Heart right ventricle (tissue), 16 donors: ENCODE measurements at regions of chr20 and their contacts with region 1.

Region 1: GRCh38 chr20:37384683-37385174 is 38.8 kb downstream of the SRC start:
- DNase-seq: peak; percentile 46 to 75
- ATAC-seq: peak; percentile 82 to 90 (median 84)
- H3K4me3 ChIP-seq: peak overlapping the region; percentile 21 to 60 (median 57)
- H3K27ac ChIP-seq: peak overlapping the region in 4 of 10 donors; percentile 28 to 74 (median 36)
- H3K4me1 ChIP-seq: peaks cover 0 to 20% (median 5%) of the 10 kb centered on the region in 9 donors
- H3K27me3 ChIP-seq: no peaks in the 10 kb centered on the region
- CTCF ChIP-seq: peak; percentile 87 to 95 (median 90)

Region 2: DNA sequence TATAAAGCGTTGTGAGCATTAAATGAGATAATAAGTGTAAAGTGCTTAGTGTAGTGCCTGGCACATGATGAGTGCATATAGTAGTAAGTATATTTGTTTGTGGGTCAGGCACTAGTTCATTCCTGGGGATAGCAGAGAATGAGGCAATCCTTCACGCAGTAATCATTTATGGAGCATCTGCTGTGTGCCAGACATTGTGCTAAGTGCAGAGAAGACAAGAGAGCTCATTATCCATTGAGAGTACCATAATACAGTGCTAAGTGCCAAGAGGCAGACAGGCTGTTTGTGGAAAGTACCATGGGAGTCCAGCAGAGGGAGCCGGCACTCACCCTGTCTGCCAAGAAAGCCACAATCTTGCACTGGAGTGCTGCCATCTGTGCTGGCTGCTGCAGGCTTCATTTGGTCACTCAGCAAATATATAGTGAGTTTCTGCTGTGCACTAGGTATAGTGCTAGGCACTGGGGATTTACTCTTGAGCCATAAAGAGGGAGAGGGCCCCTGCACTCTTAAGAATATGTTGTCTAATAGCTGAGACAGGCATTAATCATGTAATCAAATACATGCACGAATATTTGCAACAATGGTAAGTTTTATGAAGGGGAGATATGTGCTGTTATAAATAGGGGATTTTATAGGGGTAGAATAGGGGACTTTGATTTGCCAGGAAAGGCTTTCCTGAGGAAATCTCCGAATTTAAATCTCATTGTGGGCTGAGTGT is 192.4 kb before region 1 on chr20:
- intact Hi-C with region 1: loop called in 3 of 10 experiments (anchors 5 to 10 kb)
- DNase-seq: peak; percentile 82 to 90
- ATAC-seq: peak; percentile 81 to 96 (median 90)
- H3K4me3 ChIP-seq: no peak overlapping the region
- H3K27ac ChIP-seq: peak overlapping the region in 2 of 10 donors; percentile 7 to 14
- H3K4me1 ChIP-seq: peaks cover 3 to 58% (median 48%) of the 10 kb centered on the region in 9 donors
- H3K27me3 ChIP-seq: no peaks in the 10 kb centered on the region
- CTCF ChIP-seq: peak; percentile 87 to 97 (median 90)

Region 3: GRCh38 chr20:37202267-37202943 is 182.3 kb before region 1 on chr20:
- intact Hi-C with region 1: loop called in 5 of 10 experiments (anchors 5 to 10 kb)
- DNase-seq: peak in 1 of 2 donors; percentile 16
- ATAC-seq: peak in 4 of 8 donors; percentile 56 to 70 (median 64)
- H3K4me3 ChIP-seq: no peak overlapping the region
- H3K27ac ChIP-seq: peak overlapping the region in 1 of 10 donors; percentile 9
- H3K4me1 ChIP-seq: peaks cover 0 to 20% (median 6%) of the 10 kb centered on the region in 9 donors
- H3K27me3 ChIP-seq: no peaks in the 10 kb centered on the region
- CTCF ChIP-seq: peak; percentile 63 to 82 (median 74)

Region 4: GRCh38 chr20:37265152-37265551 is 119.6 kb before region 1 on chr20:
- intact Hi-C with region 1: loop called in 8 of 10 experiments (anchors 1 to 5 kb)
- DNase-seq: no peak
- ATAC-seq: no peak
- H3K4me3 ChIP-seq: no peak overlapping the region
- H3K27ac ChIP-seq: no peak overlapping the region
- H3K4me1 ChIP-seq: peaks cover 0 to 4% (median 0%) of the 10 kb centered on the region in 9 donors
- H3K27me3 ChIP-seq: peaks cover 0 to 29% (median 16%) of the 10 kb centered on the region in 7 donors
- CTCF ChIP-seq: no peak

Region 5: GRCh38 chr20:37270576-37271420 is 113.9 kb before region 1 on chr20:
- intact Hi-C with region 1: loop called (anchors 1 to 5 kb)
- DNase-seq: no peak
- ATAC-seq: peak in 6 of 8 donors; percentile 19 to 65 (median 30)
- H3K4me3 ChIP-seq: no peak overlapping the region
- H3K27ac ChIP-seq: peak overlapping the region in 2 of 10 donors; percentile 9 to 82
- H3K4me1 ChIP-seq: peaks cover 0 to 25% (median 0%) of the 10 kb centered on the region in 9 donors
- H3K27me3 ChIP-seq: no peaks in the 10 kb centered on the region
- CTCF ChIP-seq: no peak

Region 6: GRCh38 chr20:37276494-37277252 is 108.1 kb before region 1 on chr20:
- intact Hi-C with region 1: loop called in 6 of 10 experiments (anchors 2 to 5 kb)
- DNase-seq: peak; percentile 37 to 52
- ATAC-seq: peak; percentile 75 to 94 (median 86)
- H3K4me3 ChIP-seq: peak overlapping the region in 1 of 10 donors; percentile 1
- H3K27ac ChIP-seq: peak overlapping the region in 3 of 10 donors; percentile 28 to 30 (median 29)
- H3K4me1 ChIP-seq: peaks cover 0 to 35% (median 8%) of the 10 kb centered on the region in 9 donors
- H3K27me3 ChIP-seq: peaks cover 0 to 6% (median 0%) of the 10 kb centered on the region in 7 donors
- CTCF ChIP-seq: peak in 8 of 9 donors; percentile 12 to 61 (median 46)

Region 7: GRCh38 chr20:37527638-37528441 is 143.1 kb after region 1 on chr20 and contains the start of gene BLCAP:
- intact Hi-C with region 1: loop called in 8 of 10 experiments (anchors 5 to 10 kb)
- DNase-seq: peak; percentile 92 to 94
- ATAC-seq: peak; percentile 91 to 95 (median 94)
- H3K4me3 ChIP-seq: peak within 1 kb of the TSS; percentile 83 to 99 (median 93)
- H3K27ac ChIP-seq: peak within 1 kb of the TSS; percentile 90 to 99 (median 97)
- H3K4me1 ChIP-seq: peaks cover 21 to 47% (median 37%) of the 10 kb centered on the region in 9 donors
- H3K27me3 ChIP-seq: no peaks in the 10 kb centered on the region
- CTCF ChIP-seq: no peak
- total RNA-seq, gene BLCAP: 66.1 to 106 (median 84.1) TPM

Region 8: DNA sequence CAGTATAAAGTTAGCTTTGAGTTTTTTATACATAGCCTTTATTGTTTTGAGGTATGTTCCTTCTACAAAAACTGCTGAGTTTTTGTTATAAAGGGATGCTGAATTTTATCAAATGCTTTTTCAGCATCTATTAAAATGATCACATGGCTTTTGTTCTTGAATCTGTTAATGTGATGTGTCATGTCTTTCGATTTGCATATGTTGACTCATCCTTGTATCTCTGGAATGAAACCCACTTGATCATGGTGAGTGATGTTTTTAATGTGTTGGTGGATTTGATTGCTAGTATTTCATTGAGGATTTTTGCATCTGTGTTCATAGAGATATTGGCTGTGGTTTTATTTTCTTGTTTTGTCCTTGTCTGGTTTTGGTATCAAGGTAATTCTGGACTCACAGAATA is 167.7 kb after region 1 on chr20:
- intact Hi-C with region 1: no loop called
- DNase-seq: no peak
- ATAC-seq: no peak
- H3K4me3 ChIP-seq: no peak overlapping the region
- H3K27ac ChIP-seq: no peak overlapping the region
- H3K4me1 ChIP-seq: no peaks in the 10 kb centered on the region
- H3K27me3 ChIP-seq: peaks cover 0 to 9% (median 7%) of the 10 kb centered on the region in 7 donors
- CTCF ChIP-seq: no peak